A673 (cell line): ENCODE measurements at regions of chr15 and their contacts with region 1.

Region 1: DNA sequence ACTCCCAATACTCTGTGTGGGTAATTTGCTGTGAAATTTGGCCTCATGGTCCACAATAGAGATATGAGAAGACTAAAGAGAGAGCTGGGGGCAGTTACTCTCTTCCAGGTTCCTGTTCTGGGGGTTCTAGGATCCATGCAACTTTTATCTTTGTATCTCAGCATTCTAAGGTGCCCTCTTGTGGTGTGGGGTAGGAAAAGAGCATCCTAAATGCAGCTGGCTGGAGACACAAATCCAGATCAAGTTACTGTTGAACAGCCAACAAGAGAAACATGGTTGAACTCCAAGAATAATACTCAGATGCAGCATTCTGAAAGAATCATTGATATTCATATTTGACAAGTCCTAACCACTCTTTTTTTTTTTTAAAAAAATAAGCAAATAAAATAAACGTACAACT is 238.2 kb downstream of the GREM1 start:
- DNase-seq: peak; percentile 57
- H3K4me3 ChIP-seq: no peak overlapping the region
- H3K27ac ChIP-seq: no peak overlapping the region
- H3K4me1 ChIP-seq: no peaks in the 10 kb centered on the region
- H3K27me3 ChIP-seq: no peaks in the 10 kb centered on the region
- CTCF ChIP-seq: peak; percentile 59

Region 2: GRCh38 chr15:32657198-32657883 is 298.7 kb before region 1 on chr15:
- CTCF ChIA-PET with region 1: interaction called, 6 read pairs
- POLR2A ChIA-PET with region 1: no interaction called
- intact Hi-C with region 1: loop called (anchors 5 kb)
- DNase-seq: no peak
- H3K4me3 ChIP-seq: no peak overlapping the region
- H3K27ac ChIP-seq: no peak overlapping the region
- H3K4me1 ChIP-seq: no peaks in the 10 kb centered on the region
- H3K27me3 ChIP-seq: no peaks in the 10 kb centered on the region
- CTCF ChIP-seq: no peak

Region 3: DNA sequence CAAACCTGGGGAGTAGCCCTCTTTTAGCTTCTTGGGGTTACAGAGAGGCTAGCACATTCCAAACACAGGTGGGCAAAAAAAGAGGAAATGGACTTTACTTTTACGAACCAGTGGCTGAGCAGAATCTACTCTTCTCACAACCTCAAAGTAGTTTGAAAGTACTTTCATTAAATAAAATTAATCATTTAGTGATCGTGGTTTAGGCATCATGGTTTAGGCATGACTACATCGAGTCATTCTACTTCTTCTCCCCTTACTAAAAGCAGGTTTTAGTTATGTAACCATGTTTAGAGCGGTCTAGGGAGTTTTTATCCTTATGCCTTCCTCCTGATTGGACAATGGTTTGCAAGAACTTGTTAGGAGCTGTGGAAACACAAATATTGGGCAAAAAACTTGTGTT is 240.7 kb before region 1 on chr15:
- CTCF ChIA-PET with region 1: no interaction called
- POLR2A ChIA-PET with region 1: no interaction called
- intact Hi-C with region 1: no loop called
- DNase-seq: no peak
- H3K4me3 ChIP-seq: no peak overlapping the region
- H3K27ac ChIP-seq: no peak overlapping the region
- H3K4me1 ChIP-seq: peaks cover 7% of the 10 kb centered on the region
- H3K27me3 ChIP-seq: peaks cover 82% of the 10 kb centered on the region
- CTCF ChIP-seq: no peak

Region 4: GRCh38 chr15:33126559-33127290 is 170.7 kb after region 1 on chr15:
- CTCF ChIA-PET with region 1: no interaction called
- POLR2A ChIA-PET with region 1: no interaction called
- intact Hi-C with region 1: no loop called
- DNase-seq: peak; percentile 99
- H3K4me3 ChIP-seq: no peak overlapping the region
- H3K27ac ChIP-seq: no peak overlapping the region
- H3K4me1 ChIP-seq: peaks cover 20% of the 10 kb centered on the region
- H3K27me3 ChIP-seq: no peaks in the 10 kb centered on the region
- CTCF ChIP-seq: no peak

Region 5: GRCh38 chr15:33142708-33143107 is 186.7 kb after region 1 on chr15:
- CTCF ChIA-PET with region 1: no interaction called
- POLR2A ChIA-PET with region 1: no interaction called
- intact Hi-C with region 1: no loop called
- DNase-seq: no peak
- H3K4me3 ChIP-seq: no peak overlapping the region
- H3K27ac ChIP-seq: no peak overlapping the region
- H3K4me1 ChIP-seq: no peaks in the 10 kb centered on the region
- H3K27me3 ChIP-seq: peaks cover 32% of the 10 kb centered on the region
- CTCF ChIP-seq: no peak